HEK293 (cell line): ENCODE measurements at regions of chr17 and their contacts with region 1.

Region 1: DNA sequence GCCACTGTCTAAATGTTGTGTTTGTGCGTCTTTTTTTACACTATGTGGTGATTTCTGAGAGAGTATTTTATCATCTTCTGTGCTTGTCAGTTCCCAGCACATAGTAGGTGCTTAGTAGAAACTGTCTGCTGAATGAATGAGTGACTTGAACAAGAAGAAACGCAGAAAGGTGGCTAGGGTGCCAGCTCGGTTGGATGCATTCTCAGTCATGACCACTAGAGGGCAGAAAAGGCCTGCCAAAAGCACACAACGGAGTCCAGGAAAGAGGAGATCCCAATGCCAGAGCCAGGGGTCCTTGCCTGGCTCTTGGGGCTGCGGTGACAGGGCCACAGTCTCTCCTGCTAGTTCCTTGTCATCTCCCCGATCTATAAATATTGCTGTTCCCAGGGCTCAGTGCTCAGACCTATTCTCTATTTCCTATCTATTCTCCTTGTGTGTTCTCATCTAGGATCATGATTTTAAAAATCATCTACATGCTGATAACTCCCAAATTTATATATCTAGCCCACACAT is 57.3 kb upstream of the CCL1 start:
- H3K4me3 ChIP-seq: no peak overlapping the region
- H3K27ac ChIP-seq: no peak overlapping the region
- H3K4me1 ChIP-seq: no peaks in the 10 kb centered on the region
- CTCF ChIP-seq: peak; percentile 73

Region 2: DNA sequence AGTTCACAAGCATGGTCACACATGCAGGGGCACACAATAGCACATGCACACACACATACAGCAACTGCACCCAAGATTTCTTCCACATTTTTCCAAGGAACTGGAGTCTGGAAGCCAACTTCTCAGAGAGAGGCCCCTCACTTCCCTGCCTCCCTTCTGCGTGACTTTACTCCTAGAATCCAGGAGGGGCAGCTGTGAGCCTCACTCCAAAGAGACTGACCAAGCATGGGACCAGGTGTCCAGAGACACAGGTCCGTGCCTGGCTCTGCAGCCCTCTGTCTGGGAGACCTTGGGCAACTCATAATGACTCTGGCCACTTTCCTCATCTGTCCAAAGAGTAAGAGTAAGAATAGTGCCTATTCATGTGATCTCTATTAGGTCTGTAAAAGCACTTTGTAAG is 54.4 kb after region 1 on chr17:
- CTCF ChIA-PET with region 1: no interaction called
- POLR2A ChIA-PET with region 1: no interaction called
- H3K4me3 ChIP-seq: no peak overlapping the region
- H3K27ac ChIP-seq: no peak overlapping the region
- H3K4me1 ChIP-seq: no peaks in the 10 kb centered on the region
- CTCF ChIP-seq: no peak

Region 3: DNA sequence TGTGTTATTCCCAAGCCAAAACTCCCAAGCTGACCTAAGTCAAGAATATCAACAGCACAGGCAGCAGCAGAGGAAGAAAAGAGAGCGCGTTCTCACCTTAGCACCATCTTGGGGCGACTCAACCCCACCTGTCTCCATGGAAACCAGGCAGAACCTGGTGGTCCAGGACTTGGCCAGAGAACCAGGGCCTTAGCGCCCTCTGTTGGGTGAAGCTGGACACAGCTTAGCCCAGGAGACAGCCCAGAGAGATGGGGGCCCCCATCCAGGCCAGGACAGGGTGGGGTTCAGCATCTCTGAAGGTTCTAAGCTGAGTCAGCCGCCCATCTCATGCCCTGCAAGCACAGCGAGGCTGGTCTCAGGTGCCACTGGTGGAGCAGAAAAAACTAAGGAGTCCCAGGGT is 99.0 kb after region 1 on chr17:
- CTCF ChIA-PET with region 1: interaction called, 11 read pairs
- POLR2A ChIA-PET with region 1: no interaction called
- H3K4me3 ChIP-seq: no peak overlapping the region
- H3K27ac ChIP-seq: no peak overlapping the region
- H3K4me1 ChIP-seq: no peaks in the 10 kb centered on the region
- CTCF ChIP-seq: no peak; the same call in 1 of the 2 replicates